Posterior cingulate gyrus (tissue), 11 donors: ENCODE measurements at regions of chr20 and their contacts with region 1.

Region 1: DNA sequence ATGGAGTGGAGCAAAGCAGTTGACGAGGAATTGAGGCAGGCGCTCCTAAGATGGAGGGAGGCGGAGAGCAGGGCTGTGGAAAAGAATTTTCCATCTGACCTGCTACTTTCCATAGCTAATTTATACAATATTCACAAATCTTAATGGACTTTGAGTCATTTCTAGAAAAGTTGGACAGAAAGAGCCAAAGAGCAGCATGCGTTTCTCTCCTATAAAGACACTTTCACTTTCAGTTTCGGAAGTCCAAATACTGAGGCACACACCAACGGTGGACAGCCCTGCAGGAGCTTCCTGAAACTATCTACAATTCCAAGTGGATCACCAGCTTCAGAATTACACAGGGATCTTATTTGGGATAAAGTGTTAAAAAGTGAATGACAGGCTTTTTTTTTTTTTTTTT is 43.5 kb downstream of the PANK2 start:
- DNase-seq: no peak

Region 2: GRCh38 chr20:3908667-3909066 is 24.0 kb before region 1 on chr20:
- intact Hi-C with region 1: no loop called
- DNase-seq: peak in 1 of 10 donors; percentile 42

Region 3: GRCh38 chr20:4014031-4014474 is 81.4 kb after region 1 on chr20:
- intact Hi-C with region 1: loop called (anchors 5 kb)
- DNase-seq: peak in 1 of 10 donors; percentile 30